Activated CD8-positive, alpha-beta memory T cell treated with anti-CD3 and anti-CD28 coated beads, Interleukin-2, amount 10 ng/mL, durations not matched to agents 7 days and 5 days (primary cell): ENCODE measurements at regions of chr16 and their contacts with region 1.

Region 1: DNA sequence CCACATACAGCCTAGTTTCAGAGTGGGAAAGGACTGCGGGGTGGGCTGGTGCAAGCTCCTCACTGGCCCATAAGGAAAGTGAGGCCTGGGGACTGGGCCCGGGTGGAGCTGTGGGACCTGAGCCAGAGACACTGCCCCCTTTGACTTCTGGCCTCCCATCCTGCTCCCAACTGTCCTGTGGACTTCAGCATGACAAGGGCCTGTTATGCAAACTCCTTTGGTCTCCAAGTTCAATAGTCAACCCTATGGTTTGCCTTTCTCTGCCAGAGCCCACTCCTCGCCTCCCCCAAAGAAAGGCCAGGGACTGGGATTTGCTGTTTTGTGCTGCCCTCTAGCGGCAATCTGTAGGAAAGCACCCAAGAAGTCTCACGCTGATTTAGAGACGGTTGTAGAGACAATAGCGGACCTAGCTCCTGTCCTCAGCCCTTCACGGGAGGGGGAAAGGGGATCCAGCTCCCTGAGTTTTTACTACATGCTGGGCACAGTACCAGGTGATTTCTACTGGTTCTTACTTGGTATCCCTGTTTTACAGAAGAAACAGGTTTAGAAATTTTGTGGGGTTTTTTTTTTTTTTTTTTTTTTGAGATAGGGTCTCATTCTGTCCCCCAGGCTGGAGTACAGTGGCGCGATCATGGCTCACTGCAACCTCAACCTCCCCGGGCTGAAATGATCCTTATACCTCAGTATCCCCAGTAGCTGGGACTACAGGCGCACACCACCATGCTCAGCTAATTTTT is 1.2 kb upstream of the TLCD3B start:
- DNase-seq: peak; percentile 80
- ATAC-seq: peak; percentile 70
- H3K4me3 Mint-ChIP-seq: no peak overlapping the region
- H3K27ac Mint-ChIP-seq: no peak overlapping the region
- H3K4me1 Mint-ChIP-seq: peaks cover 21% of the 10 kb centered on the region
- H3K27me3 Mint-ChIP-seq: peaks cover 64% of the 10 kb centered on the region

Region 2: DNA sequence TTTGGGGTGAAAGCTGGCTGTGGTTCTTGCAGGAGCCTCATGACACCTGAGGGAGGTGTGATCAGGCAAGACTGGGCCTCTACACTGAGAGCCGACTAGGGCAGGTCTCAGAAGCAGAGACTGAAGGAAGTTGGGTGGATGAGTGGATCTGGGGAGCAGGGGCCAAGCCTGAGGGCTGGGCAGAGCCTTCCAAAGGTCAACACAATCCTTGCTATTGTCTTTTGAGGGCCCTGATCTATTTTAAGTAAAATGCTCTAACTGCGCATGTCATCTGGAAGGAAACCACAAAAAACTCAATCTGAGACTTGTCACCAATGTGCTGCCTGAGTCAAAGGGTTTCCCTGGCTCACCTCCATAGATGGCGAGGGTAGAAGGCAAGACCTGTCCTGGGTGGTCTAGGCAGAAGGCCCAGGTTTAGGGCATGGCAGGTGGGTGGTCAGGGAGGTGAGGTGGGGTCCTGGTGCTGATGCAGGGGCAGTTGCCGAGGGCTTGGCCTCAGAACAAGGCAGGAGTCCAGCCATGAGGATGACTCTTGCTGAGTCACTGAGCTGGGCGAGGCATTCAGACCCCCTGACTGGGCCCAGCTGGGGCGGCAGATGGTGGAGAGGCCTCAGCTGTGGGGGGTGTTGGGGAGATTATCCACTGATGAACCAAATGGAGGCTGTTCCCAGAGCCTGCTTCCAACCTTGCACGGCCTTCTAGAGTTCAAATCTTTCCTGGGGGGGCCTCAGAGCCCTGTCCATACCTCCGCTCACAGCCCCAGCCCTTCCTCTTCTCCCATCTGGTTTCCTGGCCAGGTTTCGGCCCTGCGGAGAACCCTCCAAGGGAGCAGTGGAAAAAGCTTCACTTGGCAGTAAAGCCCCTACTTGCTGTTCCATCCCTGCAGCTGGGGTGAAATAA is 206.9 kb before region 1 on chr16:
- CTCF ChIA-PET with region 1: interaction called, 11 read pairs
- DNase-seq: peak; percentile 77
- ATAC-seq: peak; percentile 65
- H3K4me3 Mint-ChIP-seq: peak overlapping the region; percentile 24
- H3K27ac Mint-ChIP-seq: peak overlapping the region; percentile 81
- H3K4me1 Mint-ChIP-seq: peaks cover 49% of the 10 kb centered on the region
- H3K27me3 Mint-ChIP-seq: no peaks in the 10 kb centered on the region

Region 3: GRCh38 chr16:29876217-29876593 is 156.0 kb before region 1 on chr16:
- CTCF ChIA-PET with region 1: interaction called, 12 read pairs
- DNase-seq: no peak
- ATAC-seq: no peak
- H3K4me3 Mint-ChIP-seq: peak overlapping the region; percentile 54
- H3K27ac Mint-ChIP-seq: no peak overlapping the region
- H3K4me1 Mint-ChIP-seq: peaks cover 14% of the 10 kb centered on the region
- H3K27me3 Mint-ChIP-seq: peaks cover 38% of the 10 kb centered on the region

Region 4: DNA sequence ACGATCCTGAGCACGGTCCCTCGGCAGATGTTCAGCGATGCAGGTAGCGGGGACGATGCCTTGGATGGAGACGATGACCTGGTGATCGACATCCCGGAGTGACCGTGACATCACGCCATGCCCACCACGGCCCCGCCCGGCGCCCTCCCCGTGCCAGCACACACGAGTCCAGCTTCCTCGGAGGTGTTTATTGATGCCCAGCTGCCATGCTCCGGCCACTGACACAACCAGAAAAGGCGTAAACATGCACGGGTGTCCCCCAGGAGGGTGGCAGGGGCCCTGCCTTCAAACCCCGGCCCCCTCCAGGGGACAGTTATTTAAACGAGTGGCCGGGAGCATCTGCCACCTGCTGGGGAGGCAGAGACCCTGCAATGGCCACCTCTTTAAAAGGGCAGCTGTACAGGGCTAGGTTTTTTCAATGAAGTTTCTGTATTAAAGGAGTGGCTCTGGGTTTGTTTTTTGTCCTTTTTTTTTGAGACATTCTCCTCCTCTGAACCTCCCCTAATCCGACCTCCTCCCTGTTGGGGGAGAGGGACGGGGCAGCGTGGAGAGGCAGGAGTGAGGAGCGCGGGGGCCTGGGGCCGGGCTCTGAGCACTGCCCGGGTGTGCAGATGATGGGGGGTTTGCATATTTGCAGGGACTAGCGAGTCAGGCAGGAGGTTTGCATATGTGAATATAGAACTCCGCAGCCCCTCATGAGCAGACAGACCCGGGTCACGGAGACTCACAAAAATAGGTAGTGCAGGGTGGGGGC is 26.7 kb before region 1 on chr16:
- CTCF ChIA-PET with region 1: interaction called, 12 read pairs
- DNase-seq: peak; percentile 60
- ATAC-seq: peak; percentile 64
- H3K4me3 Mint-ChIP-seq: no peak overlapping the region
- H3K27ac Mint-ChIP-seq: no peak overlapping the region
- H3K4me1 Mint-ChIP-seq: peaks cover 2% of the 10 kb centered on the region
- H3K27me3 Mint-ChIP-seq: peaks cover 14% of the 10 kb centered on the region

Region 5: GRCh38 chr16:30052671-30053372 is 20.6 kb after region 1 on chr16:
- CTCF ChIA-PET with region 1: interaction called, 39 read pairs
- DNase-seq: peak; percentile 95
- ATAC-seq: peak; percentile 81
- H3K4me3 Mint-ChIP-seq: peak overlapping the region; percentile 80
- H3K27ac Mint-ChIP-seq: peak overlapping the region; percentile 78
- H3K4me1 Mint-ChIP-seq: peaks cover 29% of the 10 kb centered on the region
- H3K27me3 Mint-ChIP-seq: no peaks in the 10 kb centered on the region